Spleen (tissue), 13 donors: ENCODE measurements at regions of chr9 and their contacts with region 1.

Region 1: DNA sequence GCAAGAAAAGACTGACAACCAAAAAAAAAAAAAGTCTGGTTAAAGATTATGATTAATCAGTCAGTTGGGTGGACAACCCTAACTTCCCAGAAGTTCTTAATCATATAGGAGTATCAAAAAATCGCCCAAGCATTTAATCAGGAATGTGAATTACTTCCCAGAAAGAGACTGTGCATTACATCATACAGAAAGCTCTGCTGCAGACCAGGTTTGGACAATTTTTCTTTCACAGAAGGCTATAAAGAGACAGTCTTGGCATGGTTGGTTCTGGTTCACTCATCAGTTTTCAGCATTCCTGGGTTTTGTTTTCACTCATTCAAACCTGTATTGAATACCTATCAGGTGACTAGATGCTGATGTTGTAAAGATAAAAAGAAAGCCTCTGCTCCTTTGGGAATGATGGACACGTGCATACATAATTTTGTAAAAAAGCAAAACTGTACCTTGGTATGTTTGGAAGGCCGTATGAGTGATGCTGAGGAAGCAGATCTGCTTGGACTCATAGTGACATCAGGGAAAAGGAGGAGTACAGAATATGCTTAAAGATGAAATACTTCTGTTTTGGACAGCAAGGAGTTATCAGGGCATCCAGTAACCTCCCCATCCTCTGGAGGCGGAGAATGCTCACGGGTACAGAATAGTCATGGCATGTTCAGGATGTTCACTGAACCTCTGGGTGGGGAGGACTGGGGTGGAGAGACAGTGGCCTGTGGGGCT is 178.4 kb downstream of the GNA14 start:
- DNase-seq: no peak
- H3K4me3 ChIP-seq: no peak overlapping the region
- H3K27ac ChIP-seq: no peak overlapping the region
- H3K4me1 ChIP-seq: no peaks in the 10 kb centered on the region
- H3K27me3 ChIP-seq: peaks cover 0 to 6% (median 0%) of the 10 kb centered on the region in 7 donors
- CTCF ChIP-seq: no peak
- POLR2A ChIP-seq: no peak

Region 2: GRCh38 chr9:77417566-77417965 is 52.1 kb before region 1 on chr9:
- intact Hi-C with region 1: no loop called
- DNase-seq: no peak
- H3K4me3 ChIP-seq: no peak overlapping the region
- H3K27ac ChIP-seq: peak overlapping the region in 5 of 8 donors; percentile 35 to 75 (median 62)
- H3K4me1 ChIP-seq: peaks cover 0 to 28% (median 6%) of the 10 kb centered on the region in 6 donors
- H3K27me3 ChIP-seq: no peaks in the 10 kb centered on the region
- CTCF ChIP-seq: no peak
- POLR2A ChIP-seq: no peak

Region 3: GRCh38 chr9:77562019-77562748 is 92.5 kb after region 1 on chr9:
- intact Hi-C with region 1: no loop called
- DNase-seq: no peak
- H3K4me3 ChIP-seq: no peak overlapping the region
- H3K27ac ChIP-seq: no peak overlapping the region
- H3K4me1 ChIP-seq: peaks cover 0 to 3% (median 0%) of the 10 kb centered on the region in 6 donors
- H3K27me3 ChIP-seq: no peaks in the 10 kb centered on the region
- CTCF ChIP-seq: no peak
- POLR2A ChIP-seq: no peak

Region 4: GRCh38 chr9:77725820-77726219 is 256.1 kb after region 1 on chr9:
- intact Hi-C with region 1: loop called (anchors 5 kb)
- DNase-seq: no peak
- H3K4me3 ChIP-seq: no peak overlapping the region
- H3K27ac ChIP-seq: no peak overlapping the region
- H3K4me1 ChIP-seq: no peaks in the 10 kb centered on the region
- H3K27me3 ChIP-seq: no peaks in the 10 kb centered on the region
- CTCF ChIP-seq: no peak
- POLR2A ChIP-seq: no peak